Psoas muscle (tissue), 8 donors: ENCODE measurements at regions of chr6 and their contacts with region 1.

Region 1: GRCh38 chr6:75788894-75789293 is 39.9 kb downstream of the MYO6 start:
- DNase-seq: no peak
- ATAC-seq: no peak
- H3K4me3 ChIP-seq: no peak overlapping the region
- H3K27ac ChIP-seq: no peak overlapping the region
- H3K4me1 ChIP-seq: no peaks in the 10 kb centered on the region
- H3K27me3 ChIP-seq: no peaks in the 10 kb centered on the region
- CTCF ChIP-seq: no peak

Region 2: GRCh38 chr6:75819776-75820487 is 31.0 kb after region 1 on chr6:
- intact Hi-C with region 1: loop called in 1 of 2 experiments (anchors 2 kb)
- DNase-seq: no peak
- ATAC-seq: no peak
- H3K4me3 ChIP-seq: no peak overlapping the region
- H3K27ac ChIP-seq: no peak overlapping the region
- H3K4me1 ChIP-seq: no peaks in the 10 kb centered on the region
- H3K27me3 ChIP-seq: no peaks in the 10 kb centered on the region
- CTCF ChIP-seq: no peak